Activated naive CD8-positive, alpha-beta T cell treated with anti-CD3 and anti-CD28 coated beads, Interleukin-2, amount 10 ng/mL, durations not matched to agents 7 days and 5 days (primary cell): ENCODE measurements at regions of chr7 and their contacts with region 1.

Region 1: GRCh38 chr7:92633211-92633906 is 43.2 kb upstream of the FAM133B start:
- DNase-seq: no peak
- ATAC-seq: peak; percentile 65
- H3K4me3 Mint-ChIP-seq: peak overlapping the region; percentile 62
- H3K27ac Mint-ChIP-seq: peak overlapping the region; percentile 69
- H3K4me1 Mint-ChIP-seq: peaks cover 48% of the 10 kb centered on the region
- H3K27me3 Mint-ChIP-seq: no peaks in the 10 kb centered on the region

Region 2: DNA sequence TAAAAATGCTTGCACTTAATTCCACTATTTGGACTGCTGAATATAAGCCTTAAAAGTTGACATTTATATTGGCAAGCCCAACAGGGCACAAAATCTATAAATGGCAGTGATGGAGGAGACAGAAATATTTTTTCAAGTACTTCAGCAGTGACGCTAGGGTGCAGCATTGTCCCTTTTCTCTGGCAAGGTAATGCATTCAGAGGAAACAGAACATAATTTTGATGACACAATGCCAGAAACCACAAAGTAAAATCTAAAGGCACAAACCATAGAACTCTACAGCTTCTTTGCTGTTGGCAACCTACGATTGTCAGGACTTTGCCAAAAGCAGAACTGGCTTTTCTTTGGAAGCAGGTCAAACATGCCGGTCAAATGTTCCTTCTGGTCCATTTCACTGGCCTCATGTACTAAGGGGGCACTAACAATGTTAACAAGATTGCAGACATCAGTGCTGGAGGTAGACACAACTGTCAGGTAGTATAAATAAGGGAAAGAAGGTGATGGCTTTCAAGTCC is 12.3 kb before region 1 on chr7:
- POLR2A ChIA-PET with region 1: interaction called, 10 read pairs
- DNase-seq: peak; percentile 56
- ATAC-seq: peak; percentile 81
- H3K4me3 Mint-ChIP-seq: peak overlapping the region; percentile 62
- H3K27ac Mint-ChIP-seq: peak overlapping the region; percentile 87
- H3K4me1 Mint-ChIP-seq: peaks cover 40% of the 10 kb centered on the region
- H3K27me3 Mint-ChIP-seq: no peaks in the 10 kb centered on the region